ENCODE measurements at regions of chr3 and their contacts with region 1.

Region 1: DNA sequence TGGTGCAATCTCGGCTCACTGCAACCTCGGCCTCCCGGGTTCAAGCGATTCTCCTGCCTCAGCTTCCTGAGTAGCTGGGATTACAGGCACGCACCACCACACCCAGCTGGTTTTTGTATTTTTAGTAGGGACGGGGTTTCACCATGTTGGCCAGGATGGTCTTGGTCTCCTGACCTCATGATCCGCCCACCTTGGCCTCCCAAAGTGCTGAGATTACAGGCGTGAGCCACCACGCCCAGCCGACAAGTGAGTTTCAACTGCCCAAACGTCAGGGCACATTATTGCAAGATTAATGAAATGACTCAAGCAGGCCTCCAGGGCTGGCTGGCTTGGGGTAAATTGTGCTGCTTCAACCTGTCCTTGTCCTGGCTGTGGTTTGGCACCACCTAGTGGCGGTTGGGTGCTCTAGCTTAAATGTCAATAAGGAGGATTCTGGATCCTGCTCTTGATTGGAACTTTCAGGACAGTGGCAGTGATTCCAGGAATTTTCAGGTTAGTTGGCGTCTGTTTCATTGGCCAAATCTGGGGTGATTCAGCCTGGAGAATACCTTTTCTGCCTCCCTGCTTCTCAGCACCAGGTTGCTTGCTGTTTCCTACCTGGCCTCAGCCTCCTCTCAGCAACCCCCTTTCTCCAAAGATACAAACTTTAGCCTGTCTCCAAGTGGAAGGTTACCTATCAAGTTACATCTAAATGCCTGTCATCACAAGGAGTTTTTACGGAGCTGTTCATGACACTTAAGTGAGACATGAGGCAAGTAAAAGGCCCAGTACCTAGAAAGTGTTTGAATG is 32.4 kb upstream of the SACM1L start:
- DNase-seq: peak; percentile 87
- ATAC-seq: peak; percentile 92
- H3K4me3 Mint-ChIP-seq: no peak overlapping the region
- H3K27ac Mint-ChIP-seq: no peak overlapping the region; the same call in 1 of the 2 replicates
- H3K4me1 Mint-ChIP-seq: peaks cover 21% of the 10 kb centered on the region
- H3K27me3 Mint-ChIP-seq: no peaks in the 10 kb centered on the region
- CTCF ChIP-seq: peak; percentile 85

Region 2: GRCh38 chr3:45537970-45538640 is 118.7 kb before region 1 on chr3:
- CTCF ChIA-PET with region 1: interaction called, 11 read pairs
- POLR2A ChIA-PET with region 1: interaction called, 3 read pairs
- DNase-seq: no peak
- ATAC-seq: no peak
- H3K4me3 Mint-ChIP-seq: no peak overlapping the region
- H3K27ac Mint-ChIP-seq: no peak overlapping the region
- H3K4me1 Mint-ChIP-seq: no peaks in the 10 kb centered on the region
- H3K27me3 Mint-ChIP-seq: no peaks in the 10 kb centered on the region
- CTCF ChIP-seq: no peak

Region 3: GRCh38 chr3:45575381-45575923 is 81.3 kb before region 1 on chr3:
- CTCF ChIA-PET with region 1: interaction called, 22 read pairs
- POLR2A ChIA-PET with region 1: no interaction called
- DNase-seq: no peak
- ATAC-seq: peak; percentile 46
- H3K4me3 Mint-ChIP-seq: no peak overlapping the region
- H3K27ac Mint-ChIP-seq: peak overlapping the region; percentile 36
- H3K4me1 Mint-ChIP-seq: peaks cover 62% of the 10 kb centered on the region
- H3K27me3 Mint-ChIP-seq: peaks cover 3% of the 10 kb centered on the region; the same call in 1 of the 2 replicates
- CTCF ChIP-seq: no peak

Region 4: DNA sequence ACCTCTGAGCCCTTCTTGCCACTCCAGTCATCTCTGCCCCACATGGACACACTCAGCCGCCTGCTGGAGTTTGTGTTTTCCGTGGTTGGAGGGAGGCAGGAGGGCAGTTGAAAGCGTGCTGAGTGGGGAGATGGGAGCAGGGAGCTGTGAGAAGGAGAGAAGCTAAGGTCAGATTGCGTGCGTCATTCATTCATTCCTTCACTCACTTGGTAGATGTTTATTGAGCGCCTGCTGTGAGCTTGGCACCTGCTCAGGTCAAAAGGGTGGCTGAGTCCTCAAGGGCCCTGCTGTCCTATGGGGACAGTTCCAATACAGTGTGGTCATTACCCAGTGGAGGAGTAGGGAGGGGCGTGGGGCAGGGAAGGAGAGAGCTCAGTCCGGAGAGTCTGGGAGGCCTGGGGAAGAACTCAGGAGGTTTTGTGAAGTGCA is 38.7 kb before region 1 on chr3:
- CTCF ChIA-PET with region 1: interaction called, 14 read pairs
- POLR2A ChIA-PET with region 1: no interaction called
- DNase-seq: no peak
- ATAC-seq: peak; percentile 48
- H3K4me3 Mint-ChIP-seq: no peak overlapping the region
- H3K27ac Mint-ChIP-seq: no peak overlapping the region
- H3K4me1 Mint-ChIP-seq: peaks cover 12% of the 10 kb centered on the region
- H3K27me3 Mint-ChIP-seq: no peaks in the 10 kb centered on the region
- CTCF ChIP-seq: no peak

Region 5: GRCh38 chr3:45666757-45667431 is 10.1 kb after region 1 on chr3:
- CTCF ChIA-PET with region 1: interaction called, 16 read pairs
- POLR2A ChIA-PET with region 1: no interaction called
- DNase-seq: no peak
- ATAC-seq: no peak
- H3K4me3 Mint-ChIP-seq: no peak overlapping the region
- H3K27ac Mint-ChIP-seq: no peak overlapping the region
- H3K4me1 Mint-ChIP-seq: peaks cover 16% of the 10 kb centered on the region
- H3K27me3 Mint-ChIP-seq: no peaks in the 10 kb centered on the region
- CTCF ChIP-seq: no peak

Region 6: GRCh38 chr3:45701172-45701867 is 44.6 kb after region 1 on chr3:
- CTCF ChIA-PET with region 1: interaction called, 17 read pairs
- POLR2A ChIA-PET with region 1: no interaction called
- DNase-seq: peak; percentile 56
- ATAC-seq: peak; percentile 94
- H3K4me3 Mint-ChIP-seq: peak overlapping the region; percentile 53
- H3K27ac Mint-ChIP-seq: peak overlapping the region; percentile 94
- H3K4me1 Mint-ChIP-seq: peaks cover 60% of the 10 kb centered on the region
- H3K27me3 Mint-ChIP-seq: no peaks in the 10 kb centered on the region
- CTCF ChIP-seq: no peak

Region 7: DNA sequence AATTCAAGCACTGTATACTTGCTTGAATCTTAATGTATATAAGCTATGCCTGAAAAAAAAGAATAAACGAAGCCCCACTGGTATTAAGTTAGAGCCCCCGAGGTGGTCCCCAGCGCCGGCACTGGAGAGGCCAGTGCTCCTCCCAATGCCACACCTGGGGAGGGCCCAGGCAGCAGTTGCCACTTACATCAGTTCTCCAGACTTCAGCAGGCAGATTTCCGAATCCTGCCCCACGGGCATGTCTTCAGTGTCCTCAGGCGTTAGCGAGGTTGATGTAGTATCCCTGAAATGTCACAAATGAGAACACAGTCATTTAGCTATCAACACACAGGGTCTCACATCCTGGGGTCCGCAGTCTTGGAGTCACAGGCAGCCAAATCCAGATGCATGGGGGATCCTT is 279.5 kb after region 1 on chr3:
- CTCF ChIA-PET with region 1: no interaction called
- POLR2A ChIA-PET with region 1: no interaction called
- DNase-seq: no peak
- ATAC-seq: no peak
- H3K4me3 Mint-ChIP-seq: no peak overlapping the region
- H3K27ac Mint-ChIP-seq: no peak overlapping the region
- H3K4me1 Mint-ChIP-seq: peaks cover 17% of the 10 kb centered on the region
- H3K27me3 Mint-ChIP-seq: no peaks in the 10 kb centered on the region
- CTCF ChIP-seq: no peak

Region 8: GRCh38 chr3:46395210-46395731 is 738.5 kb after region 1 on chr3:
- CTCF ChIA-PET with region 1: no interaction called
- POLR2A ChIA-PET with region 1: no interaction called
- DNase-seq: peak; percentile 22
- ATAC-seq: peak; percentile 72
- H3K4me3 Mint-ChIP-seq: no peak overlapping the region
- H3K27ac Mint-ChIP-seq: no peak overlapping the region
- H3K4me1 Mint-ChIP-seq: peaks cover 34% of the 10 kb centered on the region
- H3K27me3 Mint-ChIP-seq: peaks cover 15% of the 10 kb centered on the region
- CTCF ChIP-seq: no peak

Measured in WTC11 (cell line).